ENCODE measurements at regions of chr6 and their contacts with region 1.

Region 1: GRCh38 chr6:109073344-109074132 is 21.1 kb downstream of the SESN1 start:
- DNase-seq: peak; percentile 55
- ATAC-seq: peak; percentile 66
- H3K4me3 Mint-ChIP-seq: no peak overlapping the region
- H3K27ac Mint-ChIP-seq: no peak overlapping the region
- H3K4me1 Mint-ChIP-seq: peaks cover 19% of the 10 kb centered on the region
- H3K27me3 Mint-ChIP-seq: no peaks in the 10 kb centered on the region

Region 2: GRCh38 chr6:108771421-108771820 is 302.1 kb before region 1 on chr6:
- CTCF ChIA-PET with region 1: no interaction called
- POLR2A ChIA-PET with region 1: no interaction called
- intact Hi-C with region 1: no loop called
- DNase-seq: no peak
- ATAC-seq: no peak
- H3K4me3 Mint-ChIP-seq: no peak overlapping the region
- H3K27ac Mint-ChIP-seq: no peak overlapping the region
- H3K4me1 Mint-ChIP-seq: peaks cover 7% of the 10 kb centered on the region
- H3K27me3 Mint-ChIP-seq: peaks cover 4% of the 10 kb centered on the region

Region 3: GRCh38 chr6:108782179-108783041 is 291.1 kb before region 1 on chr6:
- CTCF ChIA-PET with region 1: interaction called, 7 read pairs
- POLR2A ChIA-PET with region 1: no interaction called
- intact Hi-C with region 1: loop called (anchors 2 to 5 kb)
- DNase-seq: peak; percentile 91
- ATAC-seq: peak; percentile 99
- H3K4me3 Mint-ChIP-seq: peak overlapping the region; percentile 71
- H3K27ac Mint-ChIP-seq: no peak overlapping the region
- H3K4me1 Mint-ChIP-seq: peaks cover 10% of the 10 kb centered on the region
- H3K27me3 Mint-ChIP-seq: peaks cover 3% of the 10 kb centered on the region

Region 4: GRCh38 chr6:108896111-108896661 is 177.4 kb before region 1 on chr6:
- CTCF ChIA-PET with region 1: interaction called, 22 read pairs
- POLR2A ChIA-PET with region 1: no interaction called
- intact Hi-C with region 1: loop called (anchors 5 kb)
- DNase-seq: no peak
- ATAC-seq: peak; percentile 42
- H3K4me3 Mint-ChIP-seq: no peak overlapping the region
- H3K27ac Mint-ChIP-seq: no peak overlapping the region
- H3K4me1 Mint-ChIP-seq: peaks cover 13% of the 10 kb centered on the region
- H3K27me3 Mint-ChIP-seq: no peaks in the 10 kb centered on the region

Region 5: GRCh38 chr6:109036574-109037294 is 36.8 kb before region 1 on chr6:
- CTCF ChIA-PET with region 1: interaction called, 13 read pairs
- POLR2A ChIA-PET with region 1: no interaction called
- intact Hi-C with region 1: no loop called
- DNase-seq: no peak
- ATAC-seq: no peak
- H3K4me3 Mint-ChIP-seq: no peak overlapping the region
- H3K27ac Mint-ChIP-seq: no peak overlapping the region
- H3K4me1 Mint-ChIP-seq: peaks cover 30% of the 10 kb centered on the region
- H3K27me3 Mint-ChIP-seq: no peaks in the 10 kb centered on the region

Region 6: DNA sequence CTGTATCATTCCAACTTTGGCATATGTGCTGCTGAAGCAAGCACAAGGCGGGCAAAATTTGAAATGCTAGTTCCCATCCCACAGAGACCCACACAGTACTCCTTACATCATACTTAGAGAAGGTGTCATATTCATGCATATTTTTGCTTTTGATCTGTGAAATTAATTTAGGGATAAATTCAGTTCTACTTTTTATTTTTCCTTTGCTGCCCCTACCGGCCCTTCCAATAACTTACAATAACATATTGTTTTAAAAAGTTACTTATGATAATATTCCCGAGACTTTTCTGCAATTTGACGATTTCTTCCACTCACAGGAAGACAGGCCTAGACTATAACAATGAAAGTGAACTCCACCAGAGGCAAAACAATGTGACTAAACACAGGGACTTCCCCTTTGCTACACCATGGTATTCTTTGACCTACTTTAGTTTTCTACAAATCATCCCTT is 13.9 kb before region 1 on chr6:
- CTCF ChIA-PET with region 1: interaction called, 10 read pairs
- POLR2A ChIA-PET with region 1: no interaction called
- intact Hi-C with region 1: no loop called
- DNase-seq: no peak
- ATAC-seq: peak; percentile 100
- H3K4me3 Mint-ChIP-seq: peak overlapping the region; percentile 51
- H3K27ac Mint-ChIP-seq: peak overlapping the region; percentile 89
- H3K4me1 Mint-ChIP-seq: peaks cover 47% of the 10 kb centered on the region
- H3K27me3 Mint-ChIP-seq: no peaks in the 10 kb centered on the region

Region 7: DNA sequence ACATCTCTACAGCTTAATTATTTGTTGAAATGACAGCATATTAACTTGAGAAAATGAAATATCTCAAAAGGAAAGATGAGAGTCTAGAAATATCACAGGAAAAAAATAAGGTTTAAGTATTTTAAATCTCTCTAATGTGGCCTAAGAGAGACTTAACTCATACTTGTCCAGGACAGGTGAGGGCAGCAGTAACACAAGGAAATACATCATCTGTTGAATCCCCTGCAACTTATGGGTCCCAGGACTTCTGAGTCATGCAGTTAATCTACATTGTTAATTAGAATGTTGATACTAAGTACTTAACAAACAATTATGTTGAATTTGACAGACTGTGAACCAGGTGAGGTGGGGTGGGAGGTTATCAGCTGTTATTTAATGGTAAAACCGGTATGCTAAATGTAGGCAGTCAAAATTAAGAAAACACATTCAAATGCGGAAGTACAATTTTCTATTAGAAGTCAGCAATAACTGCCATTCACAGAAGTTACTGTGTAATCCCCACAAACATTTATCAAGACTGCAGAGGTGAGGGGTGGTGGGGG is 109.6 kb after region 1 on chr6:
- CTCF ChIA-PET with region 1: no interaction called
- POLR2A ChIA-PET with region 1: no interaction called
- intact Hi-C with region 1: no loop called
- DNase-seq: no peak
- ATAC-seq: no peak
- H3K4me3 Mint-ChIP-seq: no peak overlapping the region
- H3K27ac Mint-ChIP-seq: no peak overlapping the region
- H3K4me1 Mint-ChIP-seq: peaks cover 3% of the 10 kb centered on the region
- H3K27me3 Mint-ChIP-seq: peaks cover 24% of the 10 kb centered on the region

Region 8: GRCh38 chr6:109308018-109308492 is 234.5 kb after region 1 on chr6:
- CTCF ChIA-PET with region 1: no interaction called
- POLR2A ChIA-PET with region 1: no interaction called
- intact Hi-C with region 1: no loop called
- DNase-seq: peak; percentile 75
- ATAC-seq: peak; percentile 91
- H3K4me3 Mint-ChIP-seq: no peak overlapping the region
- H3K27ac Mint-ChIP-seq: peak overlapping the region; percentile 76
- H3K4me1 Mint-ChIP-seq: peaks cover 35% of the 10 kb centered on the region
- H3K27me3 Mint-ChIP-seq: no peaks in the 10 kb centered on the region

Measured in activated CD4-positive, alpha-beta T cell treated with anti-CD3 and anti-CD28 coated beads for 36 hours (primary cell).